Mammary epithelial cell (primary cell): ENCODE measurements at regions of chr3 and their contacts with region 1.

Region 1: GRCh38 chr3:12719984-12720898 is 38.8 kb downstream of the TMEM40 start:
- DNase-seq: peak; percentile 72
- H3K4me3 ChIP-seq: peak overlapping the region; percentile 17 to 24 (median 24)
- H3K27ac ChIP-seq: no peak overlapping the region
- H3K4me1 ChIP-seq: peaks cover 4% of the 10 kb centered on the region
- H3K27me3 ChIP-seq: no peaks in the 10 kb centered on the region
- CTCF ChIP-seq: peak; percentile 97 to 98

Region 2: DNA sequence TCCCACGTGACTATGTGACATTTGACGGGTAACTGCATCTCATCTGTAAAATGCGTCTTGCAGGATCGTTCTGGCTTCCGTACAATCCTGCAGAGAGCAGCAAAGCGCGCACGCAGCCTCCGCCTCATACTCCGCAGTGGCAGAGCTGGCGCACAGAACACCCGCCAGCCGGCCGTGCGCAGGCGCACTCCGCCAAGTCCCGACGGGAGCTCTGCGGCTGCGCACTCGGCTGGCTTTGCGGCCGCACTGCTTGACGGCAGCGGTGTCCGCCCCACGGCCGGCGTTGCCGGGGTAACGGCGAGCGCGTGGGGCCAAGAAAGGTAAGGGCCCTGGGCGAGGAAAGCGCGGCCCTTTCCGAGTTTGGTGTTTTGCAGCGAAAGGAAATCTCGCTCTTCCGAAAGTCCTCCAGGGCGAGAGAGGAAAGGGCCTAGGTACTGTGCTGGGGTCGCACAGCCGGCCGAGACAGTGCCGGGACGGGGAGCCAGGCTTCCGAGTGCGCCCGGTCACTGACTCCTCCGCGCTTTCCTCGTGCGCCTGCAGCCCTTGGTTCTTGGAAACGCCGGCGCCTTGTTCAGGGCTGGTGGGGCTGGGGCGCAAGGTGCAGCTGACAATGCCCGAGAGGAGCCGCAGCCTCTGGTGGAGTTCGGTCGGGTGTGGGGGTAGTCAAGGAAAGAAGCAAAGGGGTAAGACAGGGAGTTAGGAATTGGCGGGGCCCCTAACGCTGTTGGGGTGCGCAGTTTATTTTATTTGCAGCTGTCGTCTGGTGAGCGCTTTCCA is 235.9 kb before region 1 on chr3 and contains the start of gene TSEN2:
- CTCF ChIA-PET with region 1: no interaction called
- dilution Hi-C with region 1: no loop called
- in situ Hi-C with region 1: no loop called
- intact Hi-C with region 1: loop called (anchors 10 kb)
- DNase-seq: peak; percentile 95
- H3K4me3 ChIP-seq: peak within 1 kb of the TSS; percentile 62 to 82 (median 79)
- H3K27ac ChIP-seq: peak within 1 kb of the TSS; percentile 38
- H3K4me1 ChIP-seq: peaks cover 19% of the 10 kb centered on the region
- H3K27me3 ChIP-seq: no peaks in the 10 kb centered on the region
- CTCF ChIP-seq: peak in 1 of 2 donors; percentile 38
- total RNA-seq, gene TSEN2: 16.0 to 24.6 TPM

Region 3: GRCh38 chr3:12622335-12622734 is 97.9 kb before region 1 on chr3:
- CTCF ChIA-PET with region 1: interaction called, 10 read pairs
- dilution Hi-C with region 1: no loop called
- in situ Hi-C with region 1: no loop called
- intact Hi-C with region 1: no loop called
- DNase-seq: no peak
- H3K4me3 ChIP-seq: no peak overlapping the region
- H3K27ac ChIP-seq: no peak overlapping the region
- H3K4me1 ChIP-seq: no peaks in the 10 kb centered on the region
- H3K27me3 ChIP-seq: no peaks in the 10 kb centered on the region
- CTCF ChIP-seq: no peak